Head of caudate nucleus (tissue), 42 donors: ENCODE measurements at regions of chr16 and their contacts with region 1.

Region 1: GRCh38 chr16:88811769-88812512 is at the start of gene APRT:
- DNase-seq: peak; percentile 83 to 97 (median 94)

Region 2: DNA sequence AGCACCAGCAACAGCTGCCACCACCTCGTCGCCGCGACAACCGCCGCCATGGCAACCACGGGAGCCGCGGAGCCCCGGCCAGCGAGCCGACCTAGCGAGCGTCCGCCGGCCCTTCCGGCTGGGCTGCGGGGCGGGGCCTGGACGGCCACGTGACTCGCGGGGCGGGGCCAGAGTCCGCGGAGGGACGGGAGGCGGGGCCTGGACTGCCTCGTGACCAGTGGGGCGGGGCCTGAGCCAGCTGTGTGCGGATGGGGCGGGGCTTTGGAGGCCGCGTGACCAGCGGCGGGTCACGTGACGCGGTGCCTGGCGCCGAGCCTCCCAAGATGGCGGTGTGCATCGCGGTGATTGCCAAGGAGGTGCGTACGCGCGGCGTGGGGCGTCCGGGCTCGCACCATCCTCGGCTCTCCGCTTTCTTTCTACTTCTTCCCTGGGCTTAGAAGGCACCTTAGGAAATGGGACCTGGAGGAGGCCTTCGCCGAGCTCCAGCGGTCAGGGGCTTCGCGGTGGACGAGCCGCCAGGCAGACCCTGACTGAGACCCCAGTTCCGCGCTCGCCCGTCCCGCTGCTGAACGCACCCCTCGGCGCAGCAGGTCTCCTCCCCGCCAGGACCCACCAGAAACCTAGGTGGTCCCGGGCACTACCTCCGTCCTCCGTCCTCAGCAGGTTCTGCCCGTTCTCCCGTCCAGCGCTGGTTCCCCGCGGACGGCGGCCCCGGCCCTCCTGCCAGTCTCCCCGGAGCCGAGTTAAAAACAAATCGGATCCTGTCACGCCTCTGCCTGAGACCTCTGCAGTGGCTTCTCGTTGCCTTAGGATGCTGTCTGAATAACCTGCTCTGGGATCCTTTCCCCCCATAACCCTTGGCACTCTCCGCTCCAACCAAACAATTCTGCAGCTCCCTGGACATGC is 45.1 kb after region 1 on chr16 and contains the starts of genes GALNS and TRAPPC2L:
- intact Hi-C with region 1: loop called (anchors 5 kb)
- DNase-seq: peak; percentile 97 to 100 (median 99)